PC-3 (cell line): ENCODE measurements at regions of chr3 and their contacts with region 1.

Region 1: GRCh38 chr3:79019137-79019923 is 748.5 kb downstream of the ROBO1 start:
- DNase-seq: peak; percentile 88
- ATAC-seq: peak; percentile 76
- H3K4me3 ChIP-seq: peak overlapping the region; percentile 86
- H3K27ac ChIP-seq: peak overlapping the region; percentile 89
- H3K4me1 ChIP-seq: peaks cover 19% of the 10 kb centered on the region
- H3K27me3 ChIP-seq: no peaks in the 10 kb centered on the region
- CTCF ChIP-seq: 0 out of 2 replicates have a peak, but pooled peaks have one; percentile 13

Region 2: GRCh38 chr3:78258798-78259197 is 760.5 kb before region 1 on chr3:
- CTCF ChIA-PET with region 1: no interaction called
- POLR2A ChIA-PET with region 1: no interaction called
- intact Hi-C with region 1: loop called (anchors 10 kb)
- DNase-seq: peak; percentile 25
- ATAC-seq: peak; percentile 64
- H3K4me3 ChIP-seq: no peak overlapping the region
- H3K27ac ChIP-seq: no peak overlapping the region
- H3K4me1 ChIP-seq: peaks cover 7% of the 10 kb centered on the region; the same call in 1 of the 2 replicates
- H3K27me3 ChIP-seq: no peaks in the 10 kb centered on the region
- CTCF ChIP-seq: no peak

Region 3: DNA sequence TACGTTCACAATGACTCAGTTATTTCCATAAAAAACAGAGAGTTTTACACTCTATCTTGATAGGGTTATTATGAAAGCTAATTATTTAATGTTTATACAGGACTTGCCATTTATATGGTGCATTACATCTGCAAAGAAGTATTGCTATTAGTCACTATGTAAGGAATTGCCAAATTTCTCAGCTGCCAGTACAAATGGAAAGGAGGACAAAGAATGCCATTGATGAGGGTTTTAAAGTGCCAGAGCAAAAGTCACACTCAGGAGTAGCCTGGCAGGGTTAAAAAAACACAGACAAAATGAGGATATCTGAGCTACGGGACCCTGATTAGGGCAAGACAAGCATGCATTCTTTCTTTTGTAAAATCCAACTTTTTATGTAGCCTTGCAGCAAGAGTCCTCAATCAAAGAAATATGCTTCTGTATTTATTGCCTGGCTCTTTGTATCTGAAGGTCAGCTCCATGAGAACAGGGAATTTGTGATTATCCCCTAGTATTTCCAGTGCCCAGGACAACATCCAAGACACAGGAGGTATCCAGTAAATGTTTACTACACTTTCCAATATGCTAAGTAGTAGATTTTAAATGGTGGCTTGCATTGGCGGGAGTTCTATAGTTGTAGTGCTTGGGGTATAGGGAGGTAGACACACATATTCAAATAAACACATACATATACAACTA is 265.1 kb before region 1 on chr3:
- CTCF ChIA-PET with region 1: no interaction called
- POLR2A ChIA-PET with region 1: no interaction called
- intact Hi-C with region 1: loop called (anchors 5 kb)
- DNase-seq: peak; percentile 82
- ATAC-seq: peak; percentile 91
- H3K4me3 ChIP-seq: no peak overlapping the region
- H3K27ac ChIP-seq: peak overlapping the region; percentile 48
- H3K4me1 ChIP-seq: peaks cover 32% of the 10 kb centered on the region
- H3K27me3 ChIP-seq: no peaks in the 10 kb centered on the region
- CTCF ChIP-seq: no peak

Region 4: GRCh38 chr3:78765671-78766485 is 253.5 kb before region 1 on chr3:
- CTCF ChIA-PET with region 1: no interaction called
- POLR2A ChIA-PET with region 1: no interaction called
- intact Hi-C with region 1: loop called (anchors 5 kb)
- DNase-seq: peak; percentile 50
- ATAC-seq: peak; percentile 83
- H3K4me3 ChIP-seq: peak overlapping the region; percentile 34
- H3K27ac ChIP-seq: peak overlapping the region; percentile 30; the same call in 1 of the 2 replicates
- H3K4me1 ChIP-seq: peaks cover 19% of the 10 kb centered on the region
- H3K27me3 ChIP-seq: no peaks in the 10 kb centered on the region
- CTCF ChIP-seq: no peak

Region 5: DNA sequence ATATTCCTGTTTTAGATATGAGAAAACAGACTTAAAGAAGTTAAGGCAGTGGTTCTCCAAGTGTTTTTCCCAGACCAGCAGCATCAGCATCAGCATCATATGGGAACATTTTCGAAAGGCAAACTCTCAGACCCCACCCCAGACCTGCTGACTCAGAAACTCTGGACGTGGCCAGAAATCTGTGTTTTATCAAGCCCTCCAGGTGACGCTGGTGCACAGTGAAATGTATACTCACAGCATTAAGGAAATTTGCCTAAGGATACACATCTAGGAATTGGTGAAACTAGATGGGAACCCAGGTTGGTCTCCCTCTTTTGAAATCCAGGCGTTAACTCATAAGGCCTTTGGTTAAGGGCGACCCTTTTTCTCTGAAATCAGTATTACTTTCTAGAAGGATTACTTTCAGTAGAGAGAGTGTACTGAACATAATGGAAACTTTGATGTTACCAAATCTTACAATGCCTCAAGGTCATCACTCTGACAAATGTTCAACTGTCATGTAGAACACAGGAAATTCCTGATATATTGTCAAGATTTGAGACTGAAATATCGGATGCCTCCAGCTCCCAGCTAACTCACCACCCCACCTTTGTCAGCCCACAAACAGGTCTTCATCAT is 161.7 kb before region 1 on chr3:
- CTCF ChIA-PET with region 1: no interaction called
- POLR2A ChIA-PET with region 1: no interaction called
- intact Hi-C with region 1: loop called (anchors 1 kb)
- DNase-seq: peak; percentile 63
- ATAC-seq: peak; percentile 88
- H3K4me3 ChIP-seq: no peak overlapping the region
- H3K27ac ChIP-seq: no peak overlapping the region
- H3K4me1 ChIP-seq: no peaks in the 10 kb centered on the region
- H3K27me3 ChIP-seq: no peaks in the 10 kb centered on the region
- CTCF ChIP-seq: peak; percentile 80

Region 6: GRCh38 chr3:78994174-78995027 is 24.9 kb before region 1 on chr3:
- CTCF ChIA-PET with region 1: interaction called, 3 read pairs
- POLR2A ChIA-PET with region 1: no interaction called
- intact Hi-C with region 1: loop called (anchors 1 kb)
- DNase-seq: peak; percentile 34
- ATAC-seq: peak; percentile 71
- H3K4me3 ChIP-seq: no peak overlapping the region
- H3K27ac ChIP-seq: peak overlapping the region; percentile 37
- H3K4me1 ChIP-seq: peaks cover 28% of the 10 kb centered on the region
- H3K27me3 ChIP-seq: no peaks in the 10 kb centered on the region
- CTCF ChIP-seq: no peak

Region 7: GRCh38 chr3:79032686-79033318 is 13.5 kb after region 1 on chr3:
- CTCF ChIA-PET with region 1: interaction called, 3 read pairs
- POLR2A ChIA-PET with region 1: interaction called, 3 read pairs
- intact Hi-C with region 1: loop called (anchors 1 kb)
- DNase-seq: peak; percentile 86
- ATAC-seq: peak; percentile 61
- H3K4me3 ChIP-seq: no peak overlapping the region
- H3K27ac ChIP-seq: no peak overlapping the region
- H3K4me1 ChIP-seq: peaks cover 6% of the 10 kb centered on the region; the same call in 1 of the 2 replicates
- H3K27me3 ChIP-seq: no peaks in the 10 kb centered on the region
- CTCF ChIP-seq: peak; percentile 87